ENCODE measurements at regions of chrX and their contacts with region 1.

Region 1: GRCh38 chrX:69093960-69094871 is 71.0 kb downstream of the PJA1 start:
- H3K4me3 Mint-ChIP-seq: no peak overlapping the region
- H3K27ac Mint-ChIP-seq: no peak overlapping the region
- H3K4me1 Mint-ChIP-seq: no peaks in the 10 kb centered on the region
- H3K27me3 Mint-ChIP-seq: no peaks in the 10 kb centered on the region

Region 2: DNA sequence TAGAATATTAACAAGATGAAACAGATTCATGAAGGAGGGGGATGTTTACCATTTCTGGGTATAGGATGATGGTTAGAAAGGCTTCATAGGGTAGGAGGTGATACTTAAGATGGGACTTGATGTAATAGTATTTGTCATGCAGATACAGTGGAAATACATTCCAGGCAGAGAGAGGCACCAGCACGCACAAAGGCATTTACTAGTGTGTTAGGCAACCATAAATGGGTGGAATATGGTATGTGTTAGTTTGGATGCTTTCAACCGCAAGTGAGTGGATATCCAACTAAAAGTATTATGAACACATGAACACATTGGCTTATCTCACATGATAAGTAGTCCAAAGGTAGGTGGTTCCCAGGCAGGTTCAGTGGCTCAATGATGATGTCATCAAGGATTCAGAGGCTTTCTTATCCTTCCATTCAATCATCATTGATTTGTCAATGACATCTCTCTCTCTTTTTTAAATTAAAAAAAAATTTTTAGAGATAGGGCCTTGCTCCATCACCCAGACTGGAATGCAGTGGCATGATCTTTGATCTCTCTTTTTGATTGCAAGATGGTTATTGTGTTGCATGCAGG is 459.5 kb before region 1 on chrX:
- intact Hi-C with region 1: no loop called
- H3K4me3 Mint-ChIP-seq: no peak overlapping the region
- H3K27ac Mint-ChIP-seq: no peak overlapping the region
- H3K4me1 Mint-ChIP-seq: no peaks in the 10 kb centered on the region
- H3K27me3 Mint-ChIP-seq: no peaks in the 10 kb centered on the region

Region 3: DNA sequence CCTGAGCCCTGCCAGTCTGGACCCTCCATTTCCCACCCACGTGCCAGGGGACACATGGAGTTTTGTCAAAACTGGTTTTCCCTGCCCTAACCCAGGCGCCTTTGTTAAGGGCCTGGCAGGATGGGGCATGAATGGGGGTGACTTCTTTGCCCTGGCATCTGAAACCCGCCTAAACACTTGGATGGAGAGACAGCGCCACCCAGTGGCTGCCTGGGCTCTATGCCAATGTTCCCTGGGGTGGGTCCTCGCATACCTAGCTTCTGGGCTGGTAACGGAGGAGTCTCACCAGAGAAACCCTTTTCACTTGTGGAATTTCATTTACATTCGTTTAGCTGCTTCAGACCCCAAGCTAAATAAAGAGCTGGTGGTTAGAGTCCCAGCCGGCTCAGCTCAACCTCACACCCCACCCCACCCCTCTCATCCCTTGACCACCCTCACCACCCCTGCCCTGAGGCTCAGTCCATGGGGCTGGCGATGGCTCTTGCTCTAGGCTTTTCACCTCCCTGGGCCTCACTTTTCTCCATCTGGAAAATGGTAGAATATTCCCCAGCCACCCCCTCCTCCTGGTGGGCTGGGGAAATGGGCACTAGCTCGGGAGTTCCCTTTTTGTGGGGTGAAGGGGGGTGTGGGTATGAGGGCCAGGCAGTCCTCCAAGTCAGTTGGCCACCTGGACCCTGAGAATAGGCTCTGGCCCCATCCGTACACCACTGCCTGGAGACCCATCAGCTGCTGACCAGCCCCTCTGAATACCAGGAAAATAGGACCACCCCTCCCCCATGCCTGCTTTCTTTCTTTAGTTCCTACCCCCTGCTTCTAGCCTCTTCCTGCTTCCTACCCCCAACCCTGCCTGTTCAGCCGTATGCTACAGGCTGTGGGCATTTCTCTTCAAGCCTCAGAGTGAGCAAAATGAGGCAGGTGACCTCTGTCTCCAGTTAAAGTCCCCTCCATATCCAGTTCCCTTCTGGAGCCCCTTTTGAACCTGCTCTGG is 128.2 kb after region 1 on chrX:
- intact Hi-C with region 1: loop called (anchors 2 kb)
- H3K4me3 Mint-ChIP-seq: no peak overlapping the region
- H3K27ac Mint-ChIP-seq: no peak overlapping the region
- H3K4me1 Mint-ChIP-seq: no peaks in the 10 kb centered on the region
- H3K27me3 Mint-ChIP-seq: peaks cover 7% of the 10 kb centered on the region